ENCODE measurements at regions of chr5 and their contacts with region 1.

Region 1: GRCh38 chr5:111254613-111255012 is 30.4 kb downstream of the CAMK4 start:
- DNase-seq: peak; percentile 95
- H3K4me3 Mint-ChIP-seq: peak overlapping the region; percentile 46
- H3K27ac Mint-ChIP-seq: peak overlapping the region; percentile 90
- H3K4me1 Mint-ChIP-seq: peaks cover 78% of the 10 kb centered on the region
- H3K27me3 Mint-ChIP-seq: no peaks in the 10 kb centered on the region

Region 2: DNA sequence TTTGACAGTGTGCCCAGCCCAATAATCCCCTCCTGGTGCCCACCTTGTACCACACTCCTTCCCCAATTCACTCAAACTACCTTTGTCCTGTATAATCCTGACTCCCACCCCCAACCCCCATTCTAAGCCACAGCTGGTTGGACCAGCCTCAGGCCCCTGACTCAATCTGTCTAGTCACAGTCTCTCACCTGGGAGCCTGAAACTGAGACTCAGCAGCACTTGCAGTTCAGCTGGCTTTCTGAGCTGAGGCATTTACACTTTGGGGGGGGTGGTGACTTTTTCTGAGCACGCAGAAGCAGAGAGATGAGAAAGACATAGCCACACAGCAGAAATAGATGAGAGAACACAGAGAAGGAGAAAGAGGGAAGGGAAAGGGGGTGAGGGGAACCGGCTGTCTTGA is 1317.6 kb before region 1 on chr5:
- CTCF ChIA-PET with region 1: no interaction called
- intact Hi-C with region 1: loop called (anchors 10 kb)
- DNase-seq: peak; percentile 81
- H3K4me3 Mint-ChIP-seq: peak overlapping the region; percentile 17
- H3K27ac Mint-ChIP-seq: peak overlapping the region; percentile 80
- H3K4me1 Mint-ChIP-seq: peaks cover 29% of the 10 kb centered on the region
- H3K27me3 Mint-ChIP-seq: no peaks in the 10 kb centered on the region

Region 3: GRCh38 chr5:111211341-111211740 is 43.3 kb before region 1 on chr5:
- CTCF ChIA-PET with region 1: no interaction called
- intact Hi-C with region 1: no loop called
- DNase-seq: no peak
- H3K4me3 Mint-ChIP-seq: no peak overlapping the region
- H3K27ac Mint-ChIP-seq: no peak overlapping the region
- H3K4me1 Mint-ChIP-seq: peaks cover 42% of the 10 kb centered on the region
- H3K27me3 Mint-ChIP-seq: no peaks in the 10 kb centered on the region

Region 4: GRCh38 chr5:111229871-111230810 is 24.5 kb before region 1 on chr5:
- CTCF ChIA-PET with region 1: interaction called, 55 read pairs
- intact Hi-C with region 1: loop called (anchors 1 kb)
- DNase-seq: peak; percentile 43
- H3K4me3 Mint-ChIP-seq: peak overlapping the region; percentile 68
- H3K27ac Mint-ChIP-seq: peak overlapping the region; percentile 94
- H3K4me1 Mint-ChIP-seq: peaks cover 69% of the 10 kb centered on the region
- H3K27me3 Mint-ChIP-seq: no peaks in the 10 kb centered on the region

Region 5: DNA sequence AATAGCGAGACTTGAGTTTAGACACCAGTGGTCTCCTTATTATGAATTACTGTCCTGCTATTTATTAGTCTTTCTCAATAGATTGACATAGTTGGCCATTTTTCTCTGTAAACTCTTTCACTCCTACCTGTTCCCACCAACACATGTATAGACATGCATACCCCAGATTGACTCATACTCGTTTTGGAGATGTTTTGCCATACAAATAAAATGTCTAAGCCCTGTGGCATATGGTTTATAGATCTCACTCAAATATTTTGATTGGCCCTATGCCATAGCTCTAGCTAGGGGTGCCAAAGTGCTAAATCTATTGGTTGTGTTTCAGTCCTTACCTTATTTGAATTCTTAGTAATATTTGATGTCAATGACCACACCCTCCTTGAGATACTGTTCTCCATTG is 11.9 kb after region 1 on chr5:
- CTCF ChIA-PET with region 1: interaction called, 5 read pairs
- intact Hi-C with region 1: loop called (anchors 1 kb)
- DNase-seq: no peak
- H3K4me3 Mint-ChIP-seq: no peak overlapping the region
- H3K27ac Mint-ChIP-seq: peak overlapping the region; percentile 4
- H3K4me1 Mint-ChIP-seq: peaks cover 50% of the 10 kb centered on the region
- H3K27me3 Mint-ChIP-seq: no peaks in the 10 kb centered on the region

Region 6: GRCh38 chr5:111313017-111313724 is 58.6 kb after region 1 on chr5:
- CTCF ChIA-PET with region 1: no interaction called
- intact Hi-C with region 1: loop called (anchors 1 kb)
- DNase-seq: no peak
- H3K4me3 Mint-ChIP-seq: no peak overlapping the region
- H3K27ac Mint-ChIP-seq: peak overlapping the region; percentile 51
- H3K4me1 Mint-ChIP-seq: peaks cover 83% of the 10 kb centered on the region
- H3K27me3 Mint-ChIP-seq: no peaks in the 10 kb centered on the region

Region 7: GRCh38 chr5:112154940-112155686 is 900.5 kb after region 1 on chr5:
- CTCF ChIA-PET with region 1: no interaction called
- intact Hi-C with region 1: loop called (anchors 1 kb)
- DNase-seq: no peak
- H3K4me3 Mint-ChIP-seq: no peak overlapping the region
- H3K27ac Mint-ChIP-seq: no peak overlapping the region
- H3K4me1 Mint-ChIP-seq: peaks cover 19% of the 10 kb centered on the region
- H3K27me3 Mint-ChIP-seq: no peaks in the 10 kb centered on the region